ENCODE measurements at regions of chr6 and their contacts with region 1.

Region 1: GRCh38 chr6:134938896-134939295 is 11.0 kb downstream of the ALDH8A1 start:
- DNase-seq: peak; percentile 6
- H3K4me3 ChIP-seq: no peak overlapping the region
- H3K27ac ChIP-seq: no peak overlapping the region
- H3K4me1 ChIP-seq: no peaks in the 10 kb centered on the region
- H3K27me3 ChIP-seq: no peaks in the 10 kb centered on the region
- CTCF ChIP-seq: no peak

Region 2: GRCh38 chr6:134111062-134111677 is 827.7 kb before region 1 on chr6:
- CTCF ChIA-PET with region 1: interaction called, 10 read pairs
- POLR2A ChIA-PET with region 1: no interaction called
- intact Hi-C with region 1: loop called (anchors 5 kb)
- DNase-seq: peak; percentile 89
- H3K4me3 ChIP-seq: no peak overlapping the region
- H3K27ac ChIP-seq: no peak overlapping the region
- H3K4me1 ChIP-seq: no peaks in the 10 kb centered on the region
- H3K27me3 ChIP-seq: no peaks in the 10 kb centered on the region
- CTCF ChIP-seq: peak; percentile 97

Region 3: GRCh38 chr6:134161036-134161435 is 777.9 kb before region 1 on chr6:
- CTCF ChIA-PET with region 1: interaction called, 6 read pairs
- POLR2A ChIA-PET with region 1: no interaction called
- intact Hi-C with region 1: loop called (anchors 2 kb)
- DNase-seq: no peak
- H3K4me3 ChIP-seq: no peak overlapping the region
- H3K27ac ChIP-seq: no peak overlapping the region
- H3K4me1 ChIP-seq: no peaks in the 10 kb centered on the region
- H3K27me3 ChIP-seq: no peaks in the 10 kb centered on the region
- CTCF ChIP-seq: no peak

Region 4: GRCh38 chr6:134636186-134636799 is 302.6 kb before region 1 on chr6:
- CTCF ChIA-PET with region 1: no interaction called
- POLR2A ChIA-PET with region 1: no interaction called
- intact Hi-C with region 1: no loop called
- DNase-seq: peak; percentile 34
- H3K4me3 ChIP-seq: no peak overlapping the region
- H3K27ac ChIP-seq: no peak overlapping the region
- H3K4me1 ChIP-seq: peaks cover 10% of the 10 kb centered on the region
- H3K27me3 ChIP-seq: no peaks in the 10 kb centered on the region
- CTCF ChIP-seq: no peak

Region 5: GRCh38 chr6:134888316-134888715 is 50.6 kb before region 1 on chr6:
- CTCF ChIA-PET with region 1: no interaction called
- POLR2A ChIA-PET with region 1: no interaction called
- intact Hi-C with region 1: loop called (anchors 5 kb)
- DNase-seq: no peak
- H3K4me3 ChIP-seq: no peak overlapping the region
- H3K27ac ChIP-seq: no peak overlapping the region
- H3K4me1 ChIP-seq: no peaks in the 10 kb centered on the region
- H3K27me3 ChIP-seq: no peaks in the 10 kb centered on the region
- CTCF ChIP-seq: no peak